ENCODE measurements at regions of chr19 and their contacts with region 1.

Region 1: DNA sequence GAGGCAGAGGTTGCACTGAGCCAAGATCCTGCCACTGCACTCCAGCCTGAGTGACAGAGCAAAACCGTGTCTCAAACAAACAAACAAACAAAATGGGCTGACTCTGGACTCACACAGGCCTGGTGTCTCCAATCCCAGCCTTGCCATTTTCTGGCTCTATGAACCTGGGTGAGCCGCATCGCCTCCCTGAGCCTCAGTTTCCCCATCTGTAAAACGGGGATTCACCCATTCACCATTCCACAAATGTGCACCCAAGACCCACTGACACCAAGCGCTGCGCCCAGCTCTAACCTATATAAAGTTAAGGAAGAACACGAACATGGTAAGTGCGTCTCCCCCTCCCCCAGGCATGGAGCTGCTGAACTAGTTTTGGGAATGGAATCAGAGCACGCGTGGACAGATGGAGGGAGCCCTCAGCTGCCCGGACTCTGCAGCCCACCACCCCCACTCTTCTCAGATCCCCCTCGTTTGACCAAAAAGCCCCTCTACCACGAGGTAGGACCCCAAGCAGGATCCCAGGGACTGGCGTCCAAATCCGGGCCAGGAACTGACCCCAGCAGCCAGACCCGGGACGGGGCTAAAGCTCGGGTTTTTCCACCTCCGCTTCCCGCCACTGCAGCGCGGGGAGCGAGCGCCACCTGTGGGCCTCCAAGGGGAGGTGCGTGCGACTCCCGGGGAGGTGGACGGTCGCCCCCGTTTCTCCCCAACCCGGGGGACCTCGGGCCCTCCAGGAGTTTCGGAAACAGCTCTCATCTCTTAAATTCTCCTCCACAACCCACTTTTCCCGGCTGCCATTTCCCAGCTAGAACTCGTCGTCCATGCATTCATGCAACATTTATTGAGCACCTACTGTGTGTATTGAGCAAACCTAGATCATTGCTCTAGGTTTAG is 33.0 kb upstream of the ADGRE5 start:
- DNase-seq: peak; percentile 77
- H3K4me3 ChIP-seq: peak overlapping the region in 3 of 4 donors; percentile 25 to 40 (median 35)
- H3K27ac ChIP-seq: no peak overlapping the region
- H3K4me1 ChIP-seq: peaks cover 0 to 10% (median 2%) of the 10 kb centered on the region in 4 donors
- H3K27me3 ChIP-seq: peaks cover 0 to 4% (median 0%) of the 10 kb centered on the region in 3 donors
- CTCF ChIP-seq: peak; percentile 84 to 97 (median 92)
- EP300 ChIP-seq: no peak
- POLR2A ChIP-seq: no peak

Region 2: GRCh38 chr19:13880059-13881043 is 467.9 kb before region 1 on chr19:
- intact Hi-C with region 1: loop called (anchors 2 kb)
- DNase-seq: peak; percentile 99
- H3K4me3 ChIP-seq: peak overlapping the region in 3 of 4 donors; percentile 24 to 37 (median 33)
- H3K27ac ChIP-seq: peak overlapping the region; percentile 67 to 76 (median 72)
- H3K4me1 ChIP-seq: peaks cover 0 to 30% (median 18%) of the 10 kb centered on the region in 4 donors
- H3K27me3 ChIP-seq: no peaks in the 10 kb centered on the region
- CTCF ChIP-seq: peak; percentile 98 to 100 (median 99)
- EP300 ChIP-seq: peak in 1 of 4 donors; percentile 20
- POLR2A ChIP-seq: no peak

Region 3: DNA sequence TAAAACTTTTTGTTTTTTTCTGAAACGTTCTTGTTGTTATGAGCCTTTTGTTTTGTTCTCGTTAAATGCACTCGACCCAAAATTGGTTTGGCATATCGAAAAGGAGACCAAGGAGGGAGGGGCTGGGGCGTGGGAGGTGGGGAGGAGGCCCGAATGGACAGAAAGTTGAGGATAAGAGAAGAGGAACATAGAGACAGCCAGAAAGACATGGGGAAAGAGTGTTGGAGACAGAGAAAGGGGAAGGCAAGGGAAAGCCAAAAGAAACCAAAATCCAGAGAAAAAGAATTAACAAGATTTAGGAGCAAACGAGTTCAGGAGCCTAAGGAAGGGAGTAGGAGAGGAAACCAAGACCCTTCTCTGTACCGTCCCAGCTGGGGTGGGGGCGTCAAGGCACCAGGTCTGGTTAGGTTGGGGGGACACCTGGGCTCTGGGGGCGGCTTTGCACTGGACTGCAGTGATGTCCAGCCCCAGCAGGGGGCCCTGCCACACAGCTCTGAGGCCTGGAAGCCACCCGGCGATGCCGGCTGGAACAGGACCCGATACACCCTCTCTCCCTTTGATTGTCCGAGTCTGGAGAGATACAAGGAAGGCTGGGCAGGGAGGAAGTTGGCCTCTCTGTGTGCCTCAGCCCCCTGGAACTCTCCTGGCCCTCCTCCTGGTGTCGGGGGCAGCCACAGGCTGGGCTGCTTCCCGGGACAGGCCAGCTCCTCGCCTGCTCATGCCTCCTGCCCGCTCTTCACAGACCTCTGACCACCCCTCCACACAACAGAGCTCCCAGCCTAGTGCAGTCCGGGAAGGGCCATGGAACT is 200.2 kb before region 1 on chr19:
- intact Hi-C with region 1: loop called (anchors 2 kb)
- DNase-seq: peak; percentile 91
- H3K4me3 ChIP-seq: no peak overlapping the region
- H3K27ac ChIP-seq: peak overlapping the region; percentile 73 to 79 (median 76)
- H3K4me1 ChIP-seq: peaks cover 0 to 36% (median 33%) of the 10 kb centered on the region in 4 donors
- H3K27me3 ChIP-seq: no peaks in the 10 kb centered on the region
- CTCF ChIP-seq: peak; percentile 86 to 96 (median 88)
- EP300 ChIP-seq: no peak
- POLR2A ChIP-seq: no peak

Region 4: DNA sequence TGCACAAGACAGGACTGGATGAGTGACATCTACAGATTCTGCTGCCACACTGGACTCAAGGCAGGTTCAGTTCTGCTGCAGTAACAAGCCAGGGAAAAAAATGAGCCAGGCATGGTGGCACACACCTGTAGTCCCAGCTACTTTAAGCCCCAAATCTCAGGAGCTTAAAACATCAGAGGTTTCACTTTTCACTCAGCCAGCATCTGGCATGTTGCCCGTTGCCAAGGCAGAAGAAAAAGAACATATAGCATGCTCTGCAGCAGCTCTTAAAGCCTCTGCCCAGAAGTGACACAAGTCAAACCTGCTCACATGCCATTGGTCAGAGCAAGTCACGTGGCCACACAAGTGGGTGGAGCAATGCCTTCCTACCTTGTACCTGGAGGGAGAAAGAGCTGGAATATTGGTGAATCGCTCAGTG is 18.3 kb after region 1 on chr19:
- intact Hi-C with region 1: no loop called
- DNase-seq: peak; percentile 69
- H3K4me3 ChIP-seq: no peak overlapping the region
- H3K27ac ChIP-seq: peak overlapping the region in 2 of 4 donors; percentile 6 to 37
- H3K4me1 ChIP-seq: peaks cover 0 to 38% (median 22%) of the 10 kb centered on the region in 4 donors
- H3K27me3 ChIP-seq: no peaks in the 10 kb centered on the region
- CTCF ChIP-seq: no peak
- EP300 ChIP-seq: no peak
- POLR2A ChIP-seq: no peak

Region 5: DNA sequence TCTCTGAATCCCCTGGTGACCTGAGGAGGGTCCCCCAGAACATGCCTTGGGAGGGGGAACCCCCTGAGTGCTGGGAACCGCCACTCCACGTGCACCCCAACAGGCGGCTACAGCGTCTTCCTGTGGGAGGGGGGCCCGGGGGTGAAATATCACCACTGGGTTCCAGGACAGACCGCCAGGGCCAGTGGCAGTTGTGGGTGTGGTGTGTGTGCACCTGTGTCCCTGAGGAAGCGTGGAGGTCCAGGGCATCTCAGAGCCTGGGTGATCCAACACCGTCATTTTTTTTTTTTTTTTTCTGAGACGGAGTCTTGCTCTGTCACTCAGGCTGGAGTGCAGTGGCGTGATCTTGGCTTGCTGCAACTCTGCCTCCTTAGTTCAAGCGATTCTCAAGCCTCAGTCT is 37.2 kb after region 1 on chr19:
- intact Hi-C with region 1: no loop called
- DNase-seq: peak; percentile 61
- H3K4me3 ChIP-seq: no peak overlapping the region
- H3K27ac ChIP-seq: peak overlapping the region; percentile 13 to 90 (median 22)
- H3K4me1 ChIP-seq: peaks cover 2 to 35% (median 31%) of the 10 kb centered on the region in 4 donors
- H3K27me3 ChIP-seq: no peaks in the 10 kb centered on the region
- CTCF ChIP-seq: no peak
- EP300 ChIP-seq: no peak
- POLR2A ChIP-seq: no peak